ENCODE measurements at regions of chr7 and their contacts with region 1.

Region 1: DNA sequence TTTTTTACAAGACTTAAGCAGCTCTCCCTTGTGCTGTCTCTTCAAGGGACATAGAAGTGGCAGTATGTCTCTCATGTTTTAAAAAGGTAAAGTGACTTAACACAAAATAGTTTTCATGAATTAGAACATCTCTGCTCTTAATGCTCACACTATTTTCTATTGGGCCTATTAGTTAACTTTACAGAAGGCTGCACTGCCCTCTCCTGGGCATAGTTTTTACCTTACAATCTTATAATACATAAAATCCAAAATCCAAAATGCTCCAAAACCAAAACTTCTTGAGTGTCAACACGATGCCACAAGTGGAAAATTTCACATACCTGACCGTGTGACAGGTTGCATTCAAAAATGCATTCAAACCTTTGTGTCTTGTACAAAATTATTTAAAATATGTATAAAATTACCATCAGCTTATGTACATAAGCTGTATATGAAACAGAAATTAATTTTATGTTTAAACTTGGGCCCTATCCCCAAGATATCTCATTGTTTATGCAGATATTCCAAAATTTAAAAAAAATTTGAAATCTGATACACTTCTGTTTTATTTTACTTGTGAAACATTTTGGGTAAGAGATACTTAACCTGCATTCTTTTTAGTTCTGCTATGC is 25.8 kb downstream of the TES start:
- DNase-seq: peak; percentile 50 to 65 (median 62)
- H3K4me3 ChIP-seq: no peak overlapping the region
- H3K4me3 Mint-ChIP-seq: peak overlapping the region in 4 of 8 donors; percentile 19 to 52 (median 24)
- H3K27ac ChIP-seq: no peak overlapping the region
- H3K27ac Mint-ChIP-seq: peak overlapping the region; percentile 4 to 84 (median 63)
- H3K4me1 ChIP-seq: peaks cover 50% of the 10 kb centered on the region
- H3K4me1 Mint-ChIP-seq: peaks cover 53 to 88% (median 54%) of the 10 kb centered on the region in 4 donors
- H3K27me3 ChIP-seq: no peaks in the 10 kb centered on the region
- H3K27me3 Mint-ChIP-seq: no peaks in the 10 kb centered on the region

Region 2: DNA sequence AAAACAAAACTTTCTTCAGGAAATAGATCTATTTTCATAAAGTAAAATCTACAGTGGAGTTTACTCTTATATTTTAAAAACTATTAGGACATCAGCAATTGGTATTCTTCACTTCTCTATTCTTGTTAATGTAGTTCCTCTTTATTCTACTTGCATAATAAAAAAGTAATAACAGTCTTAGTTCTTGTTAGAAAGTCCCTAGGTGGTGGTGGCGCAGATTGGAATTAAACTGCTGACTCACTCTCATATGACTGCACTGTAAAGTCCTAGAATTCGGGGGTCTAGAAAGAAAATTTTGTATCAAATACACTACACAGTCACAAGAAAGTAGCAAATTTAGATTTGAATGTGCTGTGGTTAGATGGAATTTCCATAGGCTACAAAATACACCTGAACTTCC is 70.4 kb before region 1 on chr7:
- CTCF ChIA-PET with region 1: interaction called, 16 read pairs
- POLR2A ChIA-PET with region 1: no interaction called
- intact Hi-C with region 1: no loop called
- DNase-seq: no peak
- H3K4me3 ChIP-seq: no peak overlapping the region
- H3K4me3 Mint-ChIP-seq: no peak overlapping the region
- H3K27ac ChIP-seq: no peak overlapping the region
- H3K27ac Mint-ChIP-seq: no peak overlapping the region
- H3K4me1 ChIP-seq: peaks cover 6% of the 10 kb centered on the region
- H3K4me1 Mint-ChIP-seq: peaks cover 4 to 8% (median 5%) of the 10 kb centered on the region in 4 donors
- H3K27me3 ChIP-seq: no peaks in the 10 kb centered on the region
- H3K27me3 Mint-ChIP-seq: peaks cover 11 to 15% of the 10 kb centered on the region in 2 donors

Region 3: GRCh38 chr7:116185956-116186355 is 50.2 kb before region 1 on chr7:
- CTCF ChIA-PET with region 1: interaction called, 409 read pairs
- POLR2A ChIA-PET with region 1: no interaction called
- intact Hi-C with region 1: no loop called
- DNase-seq: no peak
- H3K4me3 ChIP-seq: no peak overlapping the region
- H3K4me3 Mint-ChIP-seq: no peak overlapping the region
- H3K27ac ChIP-seq: no peak overlapping the region
- H3K27ac Mint-ChIP-seq: no peak overlapping the region
- H3K4me1 ChIP-seq: no peaks in the 10 kb centered on the region
- H3K4me1 Mint-ChIP-seq: peaks cover 0 to under 1% (median under 1%) of the 10 kb centered on the region in 4 donors
- H3K27me3 ChIP-seq: no peaks in the 10 kb centered on the region
- H3K27me3 Mint-ChIP-seq: peaks cover 0 to 4% of the 10 kb centered on the region in 2 donors

Region 4: GRCh38 chr7:116218051-116218645 is 18.0 kb before region 1 on chr7:
- CTCF ChIA-PET with region 1: interaction called, 118 read pairs
- POLR2A ChIA-PET with region 1: interaction called, 96 read pairs
- intact Hi-C with region 1: no loop called
- DNase-seq: no peak
- H3K4me3 ChIP-seq: no peak overlapping the region
- H3K4me3 Mint-ChIP-seq: peak overlapping the region in 7 of 8 donors; percentile 0 to 75 (median 51)
- H3K27ac ChIP-seq: no peak overlapping the region
- H3K27ac Mint-ChIP-seq: peak overlapping the region; percentile 14 to 86 (median 79)
- H3K4me1 ChIP-seq: peaks cover 98% of the 10 kb centered on the region
- H3K4me1 Mint-ChIP-seq: peaks cover 74 to 96% (median 82%) of the 10 kb centered on the region in 4 donors
- H3K27me3 ChIP-seq: no peaks in the 10 kb centered on the region
- H3K27me3 Mint-ChIP-seq: no peaks in the 10 kb centered on the region

Region 5: GRCh38 chr7:116258734-116259133 is 22.6 kb after region 1 on chr7:
- CTCF ChIA-PET with region 1: interaction called, 40 read pairs
- POLR2A ChIA-PET with region 1: interaction called, 3 read pairs
- intact Hi-C with region 1: no loop called
- DNase-seq: peak in 4 of 5 donors; percentile 31 to 51 (median 40)
- H3K4me3 ChIP-seq: no peak overlapping the region
- H3K4me3 Mint-ChIP-seq: no peak overlapping the region
- H3K27ac ChIP-seq: no peak overlapping the region
- H3K27ac Mint-ChIP-seq: peak overlapping the region in 5 of 7 donors; percentile 2 to 72 (median 58)
- H3K4me1 ChIP-seq: no peaks in the 10 kb centered on the region
- H3K4me1 Mint-ChIP-seq: peaks cover 2 to 11% (median 7%) of the 10 kb centered on the region in 4 donors
- H3K27me3 ChIP-seq: no peaks in the 10 kb centered on the region
- H3K27me3 Mint-ChIP-seq: no peaks in the 10 kb centered on the region

Region 6: DNA sequence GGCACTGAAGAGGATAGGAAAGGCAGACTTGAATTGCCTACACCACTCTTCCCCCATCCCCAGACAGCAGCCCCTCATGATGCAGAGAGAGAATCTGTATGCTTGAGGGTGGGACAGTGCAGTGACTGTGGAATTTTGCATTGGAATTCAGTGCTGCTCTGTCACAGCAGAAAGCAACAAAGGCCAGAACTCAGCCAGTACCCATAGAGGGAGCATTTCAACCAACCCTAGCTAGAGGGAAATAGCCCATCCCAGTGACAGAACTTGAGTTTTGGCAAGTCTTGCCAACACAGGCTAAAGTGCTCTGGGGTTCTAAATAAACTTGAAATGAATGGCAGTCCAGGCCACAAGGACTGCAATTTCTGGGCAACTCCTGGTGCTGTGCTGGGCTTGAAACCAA is 54.6 kb after region 1 on chr7:
- CTCF ChIA-PET with region 1: no interaction called
- POLR2A ChIA-PET with region 1: no interaction called
- intact Hi-C with region 1: no loop called
- DNase-seq: no peak
- H3K4me3 ChIP-seq: no peak overlapping the region
- H3K4me3 Mint-ChIP-seq: no peak overlapping the region
- H3K27ac ChIP-seq: no peak overlapping the region
- H3K27ac Mint-ChIP-seq: no peak overlapping the region
- H3K4me1 ChIP-seq: no peaks in the 10 kb centered on the region
- H3K4me1 Mint-ChIP-seq: no peaks in the 10 kb centered on the region
- H3K27me3 ChIP-seq: no peaks in the 10 kb centered on the region
- H3K27me3 Mint-ChIP-seq: peaks cover 9 to 20% of the 10 kb centered on the region in 2 donors

Region 7: GRCh38 chr7:116809636-116810266 is 573.6 kb after region 1 on chr7:
- CTCF ChIA-PET with region 1: no interaction called
- POLR2A ChIA-PET with region 1: no interaction called
- intact Hi-C with region 1: loop called (anchors 1 kb)
- DNase-seq: peak in 4 of 5 donors; percentile 16 to 34 (median 25)
- H3K4me3 ChIP-seq: no peak overlapping the region
- H3K4me3 Mint-ChIP-seq: no peak overlapping the region
- H3K27ac ChIP-seq: no peak overlapping the region
- H3K27ac Mint-ChIP-seq: no peak overlapping the region
- H3K4me1 ChIP-seq: no peaks in the 10 kb centered on the region
- H3K4me1 Mint-ChIP-seq: no peaks in the 10 kb centered on the region
- H3K27me3 ChIP-seq: no peaks in the 10 kb centered on the region
- H3K27me3 Mint-ChIP-seq: no peaks in the 10 kb centered on the region

Measured in CD4-positive, alpha-beta memory T cell (primary cell).